Posterior vena cava (tissue), 2 donors: ENCODE measurements at regions of chr1 and their contacts with region 1.

Region 1: GRCh38 chr1:157138220-157139051 is at the start of gene ETV3:
- DNase-seq: peak; percentile 97
- total RNA-seq, gene ETV3: 25.6 to 28.1 TPM

Region 2: DNA sequence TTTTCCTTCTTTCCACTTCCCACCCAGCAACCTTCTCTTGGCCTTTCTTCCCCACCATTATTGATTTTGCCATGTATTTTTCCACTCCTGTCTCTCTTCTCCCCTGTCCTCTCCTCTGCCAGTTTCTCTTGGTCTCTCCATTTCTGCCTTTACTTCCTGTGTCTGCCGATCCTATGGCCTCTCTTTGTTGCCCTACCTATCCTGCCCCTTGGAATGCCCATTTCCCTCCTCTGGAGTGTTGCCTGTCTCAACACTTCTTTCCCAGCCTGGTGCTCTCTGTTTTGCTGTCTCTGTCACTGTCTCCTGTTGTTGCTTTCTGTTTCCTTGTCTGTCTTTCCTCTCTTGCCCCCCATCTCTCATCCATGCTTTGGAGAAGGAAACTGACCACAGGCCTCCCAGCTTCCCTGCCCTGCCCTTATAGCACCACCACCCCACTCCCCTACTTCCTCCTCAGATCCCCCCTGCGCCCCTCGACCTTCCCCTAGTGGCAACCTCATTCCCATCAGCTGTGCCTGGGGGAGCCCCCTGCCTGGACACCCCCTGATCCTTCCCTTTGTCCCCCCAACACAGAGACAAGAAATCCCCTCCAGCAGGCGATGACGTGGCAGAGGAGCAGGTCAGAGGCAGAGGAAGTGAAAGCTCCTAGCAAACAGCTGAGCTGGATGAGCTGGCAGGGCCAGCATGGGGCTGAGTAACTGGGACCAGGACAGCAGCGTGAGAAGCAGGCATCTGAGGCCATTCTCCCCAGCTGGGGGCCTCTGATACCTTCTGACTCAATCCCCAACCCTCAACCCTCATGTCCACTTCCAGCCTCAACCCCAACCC is 32.2 kb before region 1 on chr1:
- intact Hi-C with region 1: loop called in 1 of 2 experiments (anchors 1 kb)
- DNase-seq: peak; percentile 82